ENCODE measurements at regions of chr5 and their contacts with region 1.

Region 1: DNA sequence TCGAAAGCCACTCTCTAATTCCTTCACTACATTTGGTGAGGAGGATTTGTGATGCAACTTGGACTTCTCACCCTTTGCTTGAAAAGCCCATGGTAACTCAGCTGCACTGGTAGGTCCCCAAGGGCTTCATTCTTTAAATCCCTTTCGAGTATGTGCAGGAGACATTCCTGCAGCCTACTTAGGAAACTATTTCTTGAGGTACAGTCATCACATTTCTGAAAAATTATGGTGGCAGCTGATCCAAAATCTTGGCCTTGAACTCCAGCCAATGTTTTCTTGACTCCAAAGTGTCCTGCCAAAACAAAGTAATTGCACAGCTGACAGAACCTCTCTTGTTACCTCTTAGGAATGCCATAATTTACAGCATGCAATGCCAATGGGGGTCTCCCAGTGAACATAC is 99.7 kb downstream of the NPR3 start:
- DNase-seq: peak in 1 of 2 donors; percentile 82
- H3K4me3 ChIP-seq: no peak overlapping the region
- H3K27ac ChIP-seq: peak overlapping the region in 1 of 2 donors; percentile 64
- H3K4me1 ChIP-seq: peaks cover 0 to 25% of the 10 kb centered on the region in 2 donors
- H3K27me3 ChIP-seq: no peaks in the 10 kb centered on the region
- CTCF ChIP-seq: no peak

Region 2: DNA sequence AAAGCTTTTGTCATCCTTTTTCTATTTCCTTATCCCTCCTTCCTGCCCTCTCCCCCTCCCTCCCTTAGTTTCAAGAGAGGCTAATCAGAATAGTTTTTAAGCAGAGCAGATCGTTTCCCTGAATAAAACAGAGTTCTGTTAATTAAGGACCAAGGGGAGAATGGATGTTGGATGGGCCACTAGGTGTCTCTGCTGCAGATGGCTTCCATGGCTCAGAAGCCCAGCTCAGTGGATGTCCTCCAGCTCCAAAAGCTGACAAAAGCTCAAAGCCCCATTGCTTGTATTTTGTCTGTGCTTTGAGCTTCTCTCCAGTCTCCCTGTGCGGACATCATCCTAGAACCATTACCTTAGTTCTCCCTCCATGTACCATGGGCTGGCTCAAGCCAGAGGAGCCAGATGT is 120.7 kb before region 1 on chr5:
- intact Hi-C with region 1: loop called (anchors 5 kb)
- DNase-seq: no peak
- H3K4me3 ChIP-seq: no peak overlapping the region
- H3K27ac ChIP-seq: peak overlapping the region; percentile 81
- H3K4me1 ChIP-seq: peaks cover 2 to 31% of the 10 kb centered on the region in 2 donors
- H3K27me3 ChIP-seq: no peaks in the 10 kb centered on the region
- CTCF ChIP-seq: no peak

Region 3: DNA sequence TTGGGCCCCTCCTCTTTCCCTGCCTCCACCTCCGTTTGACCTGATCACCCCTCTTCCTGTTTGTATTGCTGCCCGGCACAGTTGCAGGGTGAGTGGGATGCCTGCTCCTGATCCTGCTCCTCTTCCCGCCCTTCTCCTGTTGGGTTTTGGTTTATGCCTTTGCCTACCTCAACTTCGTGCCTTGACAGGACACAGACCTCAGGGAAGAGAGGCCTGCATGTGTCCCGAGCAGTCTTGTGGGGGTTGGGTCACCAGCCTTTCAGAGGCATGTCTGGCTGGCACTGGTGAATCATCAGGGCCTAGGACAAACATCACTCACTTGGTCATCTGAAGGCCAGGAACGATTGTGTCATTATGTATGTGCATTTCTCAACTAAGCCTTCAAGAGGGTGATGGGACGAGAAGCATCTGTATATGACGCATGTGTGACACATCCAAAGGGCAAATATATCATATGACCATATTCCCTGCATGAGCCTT is 42.8 kb before region 1 on chr5:
- intact Hi-C with region 1: loop called (anchors 5 kb)
- DNase-seq: peak; percentile 28 to 79
- H3K4me3 ChIP-seq: no peak overlapping the region
- H3K27ac ChIP-seq: peak overlapping the region in 1 of 2 donors; percentile 7
- H3K4me1 ChIP-seq: no peaks in the 10 kb centered on the region
- H3K27me3 ChIP-seq: no peaks in the 10 kb centered on the region
- CTCF ChIP-seq: no peak

Region 4: DNA sequence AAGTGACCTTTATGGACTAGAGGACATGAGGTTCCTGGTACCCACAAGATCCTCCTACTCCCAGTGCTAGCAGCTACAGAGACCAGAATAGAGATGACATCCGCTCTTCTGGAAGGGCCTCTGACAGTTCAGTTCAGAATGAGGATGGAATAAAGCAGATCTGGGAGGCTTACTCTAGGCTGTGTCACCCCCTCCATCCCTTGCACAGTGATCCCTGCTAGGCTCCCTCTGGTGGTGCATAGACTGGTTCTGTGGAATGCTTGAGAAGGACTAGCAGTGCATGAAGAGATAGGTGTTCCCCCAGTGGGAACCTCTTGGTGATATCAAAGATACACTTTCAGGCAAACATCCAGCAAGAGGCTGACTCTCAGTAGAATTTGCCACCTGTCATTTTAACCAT is 16.7 kb before region 1 on chr5:
- intact Hi-C with region 1: no loop called
- DNase-seq: no peak
- H3K4me3 ChIP-seq: no peak overlapping the region
- H3K27ac ChIP-seq: no peak overlapping the region
- H3K4me1 ChIP-seq: no peaks in the 10 kb centered on the region
- H3K27me3 ChIP-seq: no peaks in the 10 kb centered on the region
- CTCF ChIP-seq: no peak

Region 5: DNA sequence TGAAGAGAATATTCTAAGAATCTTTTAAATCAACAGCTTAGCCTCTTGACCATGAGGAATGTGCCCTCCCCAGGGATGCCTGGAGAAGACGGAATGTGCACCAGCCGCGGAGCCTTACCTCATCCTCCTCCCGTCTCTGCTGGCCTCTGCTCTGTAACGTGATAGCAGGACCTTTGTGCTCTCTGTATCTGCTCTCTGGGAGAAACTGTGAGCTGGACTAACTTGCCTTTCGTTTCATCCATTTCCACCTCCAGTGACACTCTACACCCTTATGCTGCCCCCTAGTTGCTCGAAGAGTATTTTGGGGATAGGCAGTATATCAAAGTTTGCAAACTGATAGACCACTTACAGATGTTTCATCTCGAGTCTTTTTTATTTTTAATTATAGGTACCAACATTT is 41.7 kb after region 1 on chr5:
- intact Hi-C with region 1: loop called (anchors 5 kb)
- DNase-seq: peak in 1 of 2 donors; percentile 75
- H3K4me3 ChIP-seq: peak overlapping the region in 1 of 2 donors; percentile 31
- H3K27ac ChIP-seq: peak overlapping the region; percentile 49 to 61
- H3K4me1 ChIP-seq: peaks cover 0 to 7% of the 10 kb centered on the region in 2 donors
- H3K27me3 ChIP-seq: no peaks in the 10 kb centered on the region
- CTCF ChIP-seq: peak; percentile 25 to 58 (median 30)

Measured in ascending aorta (tissue), 2 donors.